HepG2 (cell line): ENCODE measurements at regions of chr12 and their contacts with region 1.

Region 1: GRCh38 chr12:25436203-25437030 is 116.7 kb downstream of the LMNTD1 start:
- DNase-seq: peak; percentile 49
- ATAC-seq: peak; percentile 84
- H3K4me3 ChIP-seq: peak overlapping the region; percentile 69 to 74 (median 71)
- H3K27ac ChIP-seq: no peak overlapping the region
- H3K4me1 ChIP-seq: no peaks in the 10 kb centered on the region
- H3K27me3 ChIP-seq: no peaks in the 10 kb centered on the region
- CTCF ChIP-seq: peak; percentile 81
- EP300 ChIP-seq: no peak
- POLR2A ChIP-seq: no peak
- RAD21 ChIP-seq: no peak; the same call in 1 of the 2 replicates

Region 2: DNA sequence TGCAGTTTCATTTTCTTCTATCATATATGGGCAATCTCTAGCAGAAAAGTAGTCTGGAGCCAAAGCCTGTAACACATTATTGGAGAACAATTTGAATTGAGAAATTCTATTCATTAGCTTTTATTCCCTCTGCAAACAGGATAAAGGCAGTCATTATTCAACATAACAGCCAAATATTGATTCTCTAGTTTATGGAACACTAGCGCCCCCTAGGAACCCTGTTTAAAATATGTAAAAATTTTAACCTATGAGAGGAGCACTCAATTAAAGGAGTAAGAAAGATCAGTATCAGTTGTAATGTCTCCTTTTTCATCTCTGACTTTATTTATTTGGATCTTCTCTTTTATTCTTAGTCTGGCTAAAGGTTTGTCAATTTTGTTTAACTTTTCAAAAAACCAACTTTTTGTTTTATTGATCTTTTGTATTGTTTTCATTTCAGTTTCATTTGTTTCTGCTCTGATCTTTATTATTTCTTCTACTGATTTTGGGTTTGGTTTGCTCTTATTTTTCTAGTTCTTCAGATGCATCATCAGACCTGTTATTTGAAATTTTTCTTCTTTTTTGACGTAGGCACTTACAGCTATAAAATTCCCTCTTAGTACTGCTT is 121.5 kb after region 1 on chr12:
- CTCF ChIA-PET with region 1: interaction called, 5 read pairs
- POLR2A ChIA-PET with region 1: no interaction called
- in situ Hi-C with region 1: loop called (anchors 5 kb)
- intact Hi-C with region 1: loop called (anchors 1 kb)
- DNase-seq: peak; percentile 11
- ATAC-seq: no peak
- H3K4me3 ChIP-seq: no peak overlapping the region
- H3K27ac ChIP-seq: no peak overlapping the region
- H3K4me1 ChIP-seq: no peaks in the 10 kb centered on the region
- H3K27me3 ChIP-seq: no peaks in the 10 kb centered on the region
- CTCF ChIP-seq: peak; percentile 46
- EP300 ChIP-seq: no peak
- POLR2A ChIP-seq: no peak
- RAD21 ChIP-seq: no peak

Region 3: GRCh38 chr12:25578411-25579143 is 142.2 kb after region 1 on chr12:
- CTCF ChIA-PET with region 1: no interaction called
- POLR2A ChIA-PET with region 1: no interaction called
- in situ Hi-C with region 1: no loop called
- intact Hi-C with region 1: no loop called
- DNase-seq: no peak
- ATAC-seq: no peak
- H3K4me3 ChIP-seq: no peak overlapping the region
- H3K27ac ChIP-seq: no peak overlapping the region
- H3K4me1 ChIP-seq: no peaks in the 10 kb centered on the region
- H3K27me3 ChIP-seq: no peaks in the 10 kb centered on the region
- CTCF ChIP-seq: no peak
- EP300 ChIP-seq: no peak
- POLR2A ChIP-seq: no peak
- RAD21 ChIP-seq: no peak

Region 4: GRCh38 chr12:26017484-26018206 is 581.2 kb after region 1 on chr12:
- CTCF ChIA-PET with region 1: interaction called, 10 read pairs
- POLR2A ChIA-PET with region 1: no interaction called
- in situ Hi-C with region 1: no loop called
- intact Hi-C with region 1: loop called (anchors 1 kb)
- DNase-seq: peak; percentile 50
- ATAC-seq: peak; percentile 58; the same call in 2 of the 3 replicates
- H3K4me3 ChIP-seq: no peak overlapping the region
- H3K27ac ChIP-seq: no peak overlapping the region
- H3K4me1 ChIP-seq: no peaks in the 10 kb centered on the region
- H3K27me3 ChIP-seq: no peaks in the 10 kb centered on the region; a peak in 1 of 5 replicates
- CTCF ChIP-seq: peak; percentile 72
- EP300 ChIP-seq: no peak
- POLR2A ChIP-seq: no peak
- RAD21 ChIP-seq: peak; percentile 45; the same call in 1 of the 2 replicates

Region 5: DNA sequence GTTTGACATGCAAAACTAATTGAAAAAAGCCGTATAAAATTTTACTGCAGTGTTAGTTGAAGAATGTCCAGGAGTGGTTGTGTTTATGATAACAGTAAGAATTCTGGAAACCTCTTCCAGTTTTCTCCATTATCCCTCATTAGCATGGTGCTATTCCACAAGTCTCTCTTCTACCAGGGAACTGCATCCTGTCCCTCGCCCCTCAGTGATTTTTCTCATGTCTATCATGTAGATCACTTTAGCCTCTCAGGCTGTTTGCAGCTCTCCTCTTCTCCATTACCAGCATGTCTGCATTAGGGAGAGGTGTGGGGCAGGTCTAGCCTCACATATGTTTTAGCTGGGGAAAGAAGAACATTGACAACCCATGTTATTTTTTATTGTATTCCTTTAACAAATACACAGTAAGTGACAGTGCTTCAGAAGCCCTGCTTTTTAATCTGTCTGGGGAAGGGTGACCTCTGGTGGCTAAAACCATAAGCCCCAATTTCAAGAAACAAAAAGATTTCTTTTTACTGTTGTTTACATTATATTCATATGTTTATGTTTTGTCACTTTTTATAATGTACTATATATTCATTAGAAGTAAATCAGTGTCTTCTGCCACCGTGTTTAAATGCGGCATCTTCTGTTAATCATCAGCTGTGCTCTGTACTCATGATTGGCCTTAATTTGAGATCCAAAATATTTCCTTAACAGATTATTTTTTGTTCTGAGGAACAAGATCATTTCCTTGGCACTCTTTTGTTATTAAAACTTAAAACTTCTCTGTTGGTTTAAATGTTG is 592.7 kb after region 1 on chr12:
- CTCF ChIA-PET with region 1: interaction called, 17 read pairs
- POLR2A ChIA-PET with region 1: no interaction called
- in situ Hi-C with region 1: loop called (anchors 5 kb)
- intact Hi-C with region 1: loop called (anchors 1 kb)
- DNase-seq: peak; percentile 17
- ATAC-seq: no peak
- H3K4me3 ChIP-seq: no peak overlapping the region
- H3K27ac ChIP-seq: no peak overlapping the region
- H3K4me1 ChIP-seq: no peaks in the 10 kb centered on the region
- H3K27me3 ChIP-seq: no peaks in the 10 kb centered on the region
- CTCF ChIP-seq: peak; percentile 59
- EP300 ChIP-seq: no peak
- POLR2A ChIP-seq: no peak
- RAD21 ChIP-seq: peak; percentile 24; the same call in 1 of the 2 replicates